ENCODE measurements at regions of chr1 and their contacts with region 1.

Region 1: DNA sequence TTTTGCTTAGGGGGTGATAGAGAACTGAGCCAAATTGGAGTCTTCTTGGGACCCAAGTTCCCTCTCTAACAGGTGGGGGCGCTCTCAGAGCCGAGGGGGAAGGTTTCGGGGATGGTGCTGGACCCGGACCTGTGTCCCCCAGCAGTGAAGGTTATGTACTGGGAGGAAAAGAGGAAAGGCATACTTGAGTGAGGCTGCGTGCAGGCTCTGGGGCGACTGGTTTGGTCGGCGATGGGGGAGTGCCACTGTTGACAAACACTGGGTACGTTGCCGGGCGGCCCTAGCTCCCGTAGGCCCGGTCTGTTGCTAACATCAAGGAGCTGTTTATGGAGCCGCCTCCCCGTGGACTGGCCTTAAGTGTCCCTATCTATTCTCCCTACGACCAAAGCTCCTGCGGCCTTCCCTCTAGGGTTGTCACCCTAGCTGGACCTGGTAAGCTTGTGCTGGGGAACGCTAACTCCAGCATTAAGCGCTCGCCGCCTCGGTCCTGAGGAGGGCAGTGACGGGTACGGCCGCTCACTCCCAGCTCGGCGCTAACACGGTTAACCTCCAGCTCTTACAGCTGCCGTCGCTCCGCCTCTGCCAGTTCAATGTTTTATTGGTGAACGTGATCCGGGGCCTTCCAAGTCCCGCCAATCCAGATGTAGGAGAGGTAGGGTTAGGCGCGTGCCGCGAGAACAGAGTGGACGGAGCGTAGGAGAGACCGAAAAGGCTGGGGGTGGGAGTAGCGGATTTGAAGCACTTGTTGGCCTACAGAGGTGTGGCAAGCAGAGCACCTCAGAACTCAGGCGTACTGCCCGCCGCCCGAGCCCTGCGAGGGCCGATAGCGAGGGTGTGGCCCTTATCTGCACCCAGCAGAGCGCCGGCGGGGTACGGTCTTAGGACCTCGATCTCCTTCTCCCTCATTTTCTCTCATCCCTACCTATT is at the start of gene PPOX:
- DNase-seq: peak; percentile 91 to 99 (median 93)
- ATAC-seq: peak; percentile 93
- H3K4me3 ChIP-seq: peak within 1 kb of the TSS; percentile 55
- H3K27ac ChIP-seq: peak within 1 kb of the TSS; percentile 83
- H3K4me1 ChIP-seq: peaks cover 54 to 70% of the 10 kb centered on the region in 2 experiments
- H3K27me3 ChIP-seq: no peaks in the 10 kb centered on the region
- CTCF ChIP-seq: peak; percentile 69 to 85 (median 72)
- EP300 ChIP-seq: peak; percentile 98
- POLR2A ChIP-seq: peak; percentile 96
- RAD21 ChIP-seq: peak in 1 of 2 experiments; percentile 22; a peak in 2 of 4 replicates
- polyA plus RNA-seq, gene PPOX: 17.0 to 31.1 TPM

Region 2: DNA sequence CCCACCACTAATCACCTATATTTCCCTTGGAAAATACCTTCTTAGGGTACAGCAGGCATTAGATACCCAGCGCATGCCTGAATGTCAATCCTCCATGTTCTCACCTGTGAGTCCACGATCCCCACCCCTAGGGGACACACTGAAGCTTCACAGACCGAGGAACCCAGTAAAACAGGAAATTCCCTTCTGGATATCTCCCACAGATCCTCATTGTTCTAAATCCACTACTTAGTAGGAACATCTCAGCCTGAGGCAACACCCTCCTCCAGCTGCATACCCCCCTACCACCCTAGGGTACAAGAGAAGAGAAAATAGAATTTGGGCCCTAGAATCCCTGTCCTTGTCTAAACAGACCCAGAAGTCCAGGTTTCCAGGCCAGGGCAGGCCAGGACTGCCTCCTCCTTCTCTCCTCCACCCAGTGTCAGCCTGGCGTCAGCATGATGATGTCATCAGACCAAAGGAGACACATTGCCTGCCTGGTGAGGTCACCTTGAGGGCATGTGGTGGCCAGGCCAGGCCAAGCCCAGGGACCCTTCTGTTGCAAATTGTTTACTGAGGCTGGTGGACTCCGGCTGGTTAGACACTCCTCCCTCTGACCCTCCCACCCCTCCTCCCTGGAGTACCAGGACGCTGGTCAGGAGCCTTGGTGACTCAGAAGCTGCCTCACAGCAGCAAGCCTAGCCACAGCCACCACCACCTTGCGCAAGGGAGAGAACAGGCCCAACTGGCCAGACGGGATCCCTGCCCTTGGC is 82.8 kb before region 1 on chr1:
- CTCF ChIA-PET with region 1: no interaction called
- POLR2A ChIA-PET with region 1: no interaction called
- in situ Hi-C with region 1: no loop called
- intact Hi-C with region 1: no loop called
- DNase-seq: peak; percentile 73 to 83 (median 76)
- ATAC-seq: peak; percentile 91
- H3K4me3 ChIP-seq: no peak overlapping the region
- H3K27ac ChIP-seq: peak overlapping the region; percentile 54; the same call in 2 of the 3 replicates
- H3K4me1 ChIP-seq: peaks cover 12 to 18% of the 10 kb centered on the region in 2 experiments; a peak in 4 of 5 replicates
- H3K27me3 ChIP-seq: no peaks in the 10 kb centered on the region
- CTCF ChIP-seq: no peak
- EP300 ChIP-seq: peak; percentile 14; the same call in 1 of the 2 replicates
- POLR2A ChIP-seq: no peak
- RAD21 ChIP-seq: no peak

Region 3: DNA sequence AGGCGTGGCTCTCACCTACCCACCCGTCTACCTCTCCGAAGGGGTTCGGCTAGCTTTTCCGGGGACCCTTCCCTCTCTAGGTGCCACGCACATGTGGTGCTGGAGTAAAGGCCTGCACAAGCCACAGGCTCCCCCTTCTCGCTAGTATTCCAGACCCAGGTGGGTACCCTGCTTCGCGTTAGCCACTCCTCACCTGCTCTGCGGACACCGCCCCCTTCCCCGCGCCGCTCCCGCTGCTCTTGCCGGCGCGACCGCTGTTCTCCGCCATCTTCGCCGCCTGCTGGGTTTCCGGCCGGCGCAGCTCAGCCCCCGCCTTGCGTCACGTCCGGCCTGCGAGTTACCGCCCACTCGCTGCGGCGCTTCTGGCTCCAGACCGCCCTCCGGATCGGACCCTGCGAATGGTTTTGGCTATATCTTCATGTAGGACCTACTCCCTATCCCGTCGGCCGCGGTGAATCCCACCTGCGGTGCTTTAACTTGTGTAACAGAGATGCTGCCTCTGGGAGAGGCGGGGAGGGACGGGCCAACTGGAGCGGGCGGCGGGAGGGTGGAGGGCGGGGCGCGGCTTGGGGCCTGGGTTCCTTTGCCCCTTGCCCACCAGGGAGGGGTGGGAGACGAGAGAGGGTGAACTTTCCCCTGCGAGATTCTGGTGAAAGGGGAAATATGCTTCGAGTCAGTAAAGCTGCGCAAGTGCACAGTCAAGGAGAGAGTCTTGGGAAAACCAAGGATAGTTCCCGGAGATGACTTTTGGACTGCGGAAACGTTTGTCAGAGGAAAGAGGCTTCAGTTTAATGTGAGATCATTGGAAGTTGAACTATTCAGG is 48.0 kb before region 1 on chr1 and contains the starts of genes NIT1 and PFDN2:
- CTCF ChIA-PET with region 1: no interaction called
- POLR2A ChIA-PET with region 1: interaction called, 3 read pairs
- in situ Hi-C with region 1: no loop called
- intact Hi-C with region 1: loop called (anchors 2 kb)
- DNase-seq: peak; percentile 85 to 93 (median 88)
- ATAC-seq: peak; percentile 83
- H3K4me3 ChIP-seq: peak within 1 kb of the TSS; percentile 81
- H3K27ac ChIP-seq: peak within 1 kb of the TSS; percentile 95
- H3K4me1 ChIP-seq: peaks cover 28 to 44% of the 10 kb centered on the region in 2 experiments
- H3K27me3 ChIP-seq: no peaks in the 10 kb centered on the region; a peak in 1 of 5 replicates
- CTCF ChIP-seq: 0 out of 6 replicates have a peak, but pooled peaks of 1 of the 3 experiments have one; percentile 17
- EP300 ChIP-seq: no peak
- POLR2A ChIP-seq: peak; percentile 94
- RAD21 ChIP-seq: no peak
- polyA plus RNA-seq, gene NIT1: 69.8 to 76.0 TPM
- polyA plus RNA-seq, gene PFDN2: 50.2 to 77.1 TPM

Region 4: GRCh38 chr1:161153679-161154426 is 12.2 kb before region 1 on chr1 and contains the start of gene UFC1:
- CTCF ChIA-PET with region 1: no interaction called
- POLR2A ChIA-PET with region 1: interaction called, 30 read pairs
- in situ Hi-C with region 1: no loop called
- intact Hi-C with region 1: no loop called
- DNase-seq: peak; percentile 68 to 92 (median 77)
- ATAC-seq: peak; percentile 92
- H3K4me3 ChIP-seq: peak within 1 kb of the TSS; percentile 52
- H3K27ac ChIP-seq: peak within 1 kb of the TSS; percentile 92
- H3K4me1 ChIP-seq: peaks cover 7 to 19% of the 10 kb centered on the region in 2 experiments; a peak in 4 of 5 replicates
- H3K27me3 ChIP-seq: no peaks in the 10 kb centered on the region
- CTCF ChIP-seq: no peak
- EP300 ChIP-seq: peak; percentile 7; the same call in 1 of the 2 replicates
- POLR2A ChIP-seq: peak; percentile 94
- RAD21 ChIP-seq: no peak
- polyA plus RNA-seq, gene UFC1: 213 to 220 TPM

Region 5: GRCh38 chr1:161420763-161421455 is 254.9 kb after region 1 on chr1:
- CTCF ChIA-PET with region 1: no interaction called
- POLR2A ChIA-PET with region 1: no interaction called
- in situ Hi-C with region 1: no loop called
- intact Hi-C with region 1: no loop called
- DNase-seq: peak in 2 of 4 experiments; percentile 23 to 46
- ATAC-seq: peak; percentile 38
- H3K4me3 ChIP-seq: no peak overlapping the region
- H3K27ac ChIP-seq: no peak overlapping the region
- H3K4me1 ChIP-seq: peaks cover 4% of the 10 kb centered on the region in 2 experiments; a peak in 2 of 5 replicates
- H3K27me3 ChIP-seq: no peaks in the 10 kb centered on the region
- CTCF ChIP-seq: no peak
- EP300 ChIP-seq: no peak
- POLR2A ChIP-seq: no peak
- RAD21 ChIP-seq: no peak